PC-3 (cell line): ENCODE measurements at regions of chr14 and their contacts with region 1.

Region 1: DNA sequence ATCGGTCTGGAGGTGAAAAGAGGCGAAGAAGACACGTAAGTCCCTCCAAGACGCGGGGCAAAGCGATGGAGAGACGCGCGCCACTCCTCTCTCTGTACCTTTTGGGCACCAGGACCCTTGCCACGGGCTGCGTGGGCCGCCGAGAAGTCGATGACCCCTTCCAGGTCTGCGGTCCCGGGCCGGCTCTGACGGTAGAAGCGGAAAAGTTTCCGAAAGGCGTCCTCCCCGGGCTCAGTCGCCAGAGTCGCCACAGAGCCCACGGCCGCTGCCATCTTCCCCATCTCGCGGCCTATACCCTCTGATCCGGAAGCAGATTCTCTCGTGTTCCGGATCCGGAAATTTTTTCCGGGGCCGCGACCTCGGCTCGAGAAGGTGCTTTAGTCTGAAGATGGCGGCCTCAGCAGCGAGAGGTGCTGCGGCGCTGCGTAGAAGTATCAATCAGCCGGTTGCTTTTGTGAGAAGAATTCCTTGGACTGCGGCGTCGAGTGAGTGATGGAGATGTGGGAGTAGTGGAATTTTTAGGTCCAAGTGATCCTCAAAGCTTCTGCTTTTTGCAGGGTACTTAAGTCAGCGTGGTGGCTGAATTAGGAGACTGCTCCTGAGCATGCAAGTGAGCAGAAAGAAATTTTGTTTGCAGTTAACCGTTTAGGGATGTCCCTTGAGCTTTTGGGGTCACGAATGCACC is at the starts of genes ALKBH1 and SLIRP:
- DNase-seq: peak; percentile 91
- ATAC-seq: peak; percentile 96
- H3K4me3 ChIP-seq: peak within 1 kb of the TSS; percentile 95
- H3K27ac ChIP-seq: peak within 1 kb of the TSS; percentile 19; the same call in 1 of the 2 replicates
- H3K4me1 ChIP-seq: peaks cover 18% of the 10 kb centered on the region
- H3K27me3 ChIP-seq: no peaks in the 10 kb centered on the region
- CTCF ChIP-seq: no peak; the same call in 1 of the 2 replicates
- total RNA-seq, gene ALKBH1: 9.7 and 10.8 TPM in 2 replicates
- total RNA-seq, gene SLIRP: 904 and 934 TPM in 2 replicates

Region 2: DNA sequence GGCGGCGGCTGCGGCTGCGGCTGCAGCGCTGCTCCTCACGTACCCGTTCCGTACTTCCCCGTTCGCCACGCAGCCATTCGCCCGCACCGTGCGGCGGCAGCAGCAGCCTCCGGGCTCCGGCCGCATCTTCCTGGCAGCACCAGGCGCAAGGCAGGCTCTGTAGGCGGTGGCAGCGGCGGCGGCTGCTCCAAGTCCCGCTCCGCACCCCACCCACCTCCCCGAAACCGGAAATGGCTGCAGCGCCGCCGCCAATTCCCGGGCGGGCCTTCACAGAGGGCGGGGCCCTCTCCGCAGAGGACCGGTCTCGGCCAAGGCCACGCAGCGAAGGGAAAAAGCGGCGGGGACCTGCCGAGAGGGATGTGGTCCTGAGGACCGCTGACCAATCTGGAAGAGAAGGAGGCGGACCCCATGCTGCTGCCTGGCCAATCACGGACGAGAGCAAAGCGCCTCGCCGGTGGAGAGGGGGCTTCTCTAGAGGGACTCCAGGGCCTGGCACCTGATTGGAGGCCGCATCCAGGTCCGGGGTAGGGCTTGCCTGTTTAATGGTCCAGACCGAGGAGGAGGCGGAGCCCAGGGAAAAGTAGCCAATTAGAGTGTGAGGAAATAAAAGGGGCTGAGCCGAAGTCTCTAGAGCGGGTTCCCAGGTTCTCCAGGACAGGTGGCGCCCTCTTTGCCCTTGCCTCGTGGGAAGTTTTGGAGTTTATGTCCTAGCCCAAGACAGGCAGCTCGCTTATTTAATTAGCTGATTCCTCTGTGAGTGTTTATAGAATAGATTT is 91.2 kb before region 1 on chr14 and contains the start of gene SPTLC2:
- CTCF ChIA-PET with region 1: no interaction called
- POLR2A ChIA-PET with region 1: no interaction called
- intact Hi-C with region 1: loop called (anchors 1 kb)
- DNase-seq: peak; percentile 99
- ATAC-seq: peak; percentile 94
- H3K4me3 ChIP-seq: peak within 1 kb of the TSS; percentile 97
- H3K27ac ChIP-seq: peak within 1 kb of the TSS; percentile 45
- H3K4me1 ChIP-seq: peaks cover 28% of the 10 kb centered on the region
- H3K27me3 ChIP-seq: no peaks in the 10 kb centered on the region
- CTCF ChIP-seq: peak; percentile 42; the same call in 1 of the 2 replicates
- total RNA-seq, gene SPTLC2: 25.6 and 27.6 TPM in 2 replicates

Region 3: DNA sequence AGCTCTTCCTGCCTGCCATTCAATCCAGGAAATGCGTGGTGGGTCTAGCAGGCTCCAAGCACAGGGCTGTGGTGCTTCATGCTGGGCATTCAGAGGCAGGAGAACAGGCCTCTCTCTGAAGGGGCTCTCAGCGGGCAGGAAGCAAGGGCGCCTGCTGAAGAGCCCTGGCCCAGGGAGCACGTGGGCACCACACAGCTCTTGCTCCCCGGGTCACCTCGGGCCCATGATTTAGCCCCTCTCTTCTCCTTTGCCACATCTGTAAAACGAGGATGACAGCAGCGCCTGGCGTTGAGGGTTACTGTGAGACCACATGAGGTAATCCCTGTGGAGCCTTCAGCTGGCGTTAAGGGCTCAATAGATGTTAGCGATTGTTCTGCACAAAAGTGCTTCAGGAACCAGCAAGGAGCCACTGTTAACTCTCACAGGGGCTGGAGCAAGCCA is 53.8 kb before region 1 on chr14:
- CTCF ChIA-PET with region 1: no interaction called
- POLR2A ChIA-PET with region 1: no interaction called
- intact Hi-C with region 1: loop called (anchors 2 kb)
- DNase-seq: no peak
- ATAC-seq: no peak
- H3K4me3 ChIP-seq: no peak overlapping the region
- H3K27ac ChIP-seq: no peak overlapping the region
- H3K4me1 ChIP-seq: no peaks in the 10 kb centered on the region
- H3K27me3 ChIP-seq: no peaks in the 10 kb centered on the region
- CTCF ChIP-seq: no peak

Region 4: DNA sequence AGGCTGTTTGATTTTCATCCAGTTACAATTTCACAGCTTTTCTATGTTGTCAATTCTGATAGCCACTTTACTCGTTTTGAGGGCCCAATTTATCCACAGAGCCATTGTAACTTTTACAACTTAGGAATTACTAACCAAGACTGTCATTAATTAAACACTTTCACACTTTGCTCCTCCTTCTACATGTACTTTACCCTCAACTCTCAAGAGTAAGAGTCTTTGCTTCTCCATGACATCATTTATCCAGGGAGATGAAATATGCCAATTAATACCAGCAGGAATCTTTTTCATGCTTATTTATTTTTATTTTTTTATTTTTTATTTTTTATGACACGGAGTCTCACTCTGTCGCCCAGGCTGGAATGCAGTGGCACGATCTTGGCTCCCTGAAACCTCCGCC is 13.6 kb after region 1 on chr14:
- CTCF ChIA-PET with region 1: interaction called, 10 read pairs
- POLR2A ChIA-PET with region 1: no interaction called
- intact Hi-C with region 1: no loop called
- DNase-seq: no peak
- ATAC-seq: no peak
- H3K4me3 ChIP-seq: no peak overlapping the region
- H3K27ac ChIP-seq: no peak overlapping the region
- H3K4me1 ChIP-seq: no peaks in the 10 kb centered on the region
- H3K27me3 ChIP-seq: no peaks in the 10 kb centered on the region
- CTCF ChIP-seq: no peak